ENCODE measurements at regions of chr1 and their contacts with region 1.

Region 1: GRCh38 chr1:229558571-229559335 is at the start of gene ABCB10:
- DNase-seq: peak; percentile 100
- H3K4me3 Mint-ChIP-seq: peak within 1 kb of the TSS; percentile 83
- H3K27ac Mint-ChIP-seq: peak within 1 kb of the TSS; percentile 76
- H3K4me1 Mint-ChIP-seq: peaks cover 30% of the 10 kb centered on the region
- H3K27me3 Mint-ChIP-seq: no peaks in the 10 kb centered on the region
- CTCF ChIP-seq: peak; percentile 98
- total RNA-seq, gene ABCB10: 34.8 and 38.4 TPM in 2 replicates

Region 2: GRCh38 chr1:229514578-229515275 is 44.0 kb before region 1 on chr1:
- CTCF ChIA-PET with region 1: interaction called, 14 read pairs
- POLR2A ChIA-PET with region 1: interaction called, 88 read pairs
- intact Hi-C with region 1: no loop called
- DNase-seq: peak; percentile 90
- H3K4me3 Mint-ChIP-seq: no peak overlapping the region
- H3K27ac Mint-ChIP-seq: no peak overlapping the region
- H3K4me1 Mint-ChIP-seq: peaks cover 6% of the 10 kb centered on the region
- H3K27me3 Mint-ChIP-seq: no peaks in the 10 kb centered on the region
- CTCF ChIP-seq: peak; percentile 91

Region 3: GRCh38 chr1:229547542-229547941 is 11.2 kb before region 1 on chr1:
- CTCF ChIA-PET with region 1: interaction called, 22 read pairs
- POLR2A ChIA-PET with region 1: interaction called, 18 read pairs
- intact Hi-C with region 1: no loop called
- DNase-seq: no peak
- H3K4me3 Mint-ChIP-seq: no peak overlapping the region
- H3K27ac Mint-ChIP-seq: no peak overlapping the region
- H3K4me1 Mint-ChIP-seq: peaks cover 12% of the 10 kb centered on the region
- H3K27me3 Mint-ChIP-seq: no peaks in the 10 kb centered on the region
- CTCF ChIP-seq: no peak

Region 4: GRCh38 chr1:229579059-229579673 is 20.4 kb after region 1 on chr1:
- CTCF ChIA-PET with region 1: interaction called, 14 read pairs
- POLR2A ChIA-PET with region 1: interaction called, 21 read pairs
- intact Hi-C with region 1: no loop called
- DNase-seq: peak; percentile 38
- H3K4me3 Mint-ChIP-seq: no peak overlapping the region
- H3K27ac Mint-ChIP-seq: no peak overlapping the region
- H3K4me1 Mint-ChIP-seq: peaks cover 11% of the 10 kb centered on the region
- H3K27me3 Mint-ChIP-seq: no peaks in the 10 kb centered on the region
- CTCF ChIP-seq: no peak

Region 5: GRCh38 chr1:229596925-229597699 is 38.4 kb after region 1 on chr1:
- CTCF ChIA-PET with region 1: interaction called, 20 read pairs
- POLR2A ChIA-PET with region 1: interaction called, 21 read pairs
- intact Hi-C with region 1: no loop called
- DNase-seq: peak; percentile 34
- H3K4me3 Mint-ChIP-seq: no peak overlapping the region
- H3K27ac Mint-ChIP-seq: peak overlapping the region; percentile 57
- H3K4me1 Mint-ChIP-seq: peaks cover 30% of the 10 kb centered on the region
- H3K27me3 Mint-ChIP-seq: no peaks in the 10 kb centered on the region
- CTCF ChIP-seq: no peak

Region 6: GRCh38 chr1:229625915-229626831 is 67.4 kb after region 1 on chr1 and contains the starts of genes TAF5L and URB2:
- CTCF ChIA-PET with region 1: interaction called, 65 read pairs
- POLR2A ChIA-PET with region 1: interaction called, 375 read pairs
- intact Hi-C with region 1: loop called (anchors 1 kb)
- DNase-seq: peak; percentile 96
- H3K4me3 Mint-ChIP-seq: peak within 1 kb of the TSS; percentile 99
- H3K27ac Mint-ChIP-seq: peak within 1 kb of the TSS; percentile 94
- H3K4me1 Mint-ChIP-seq: peaks cover 57% of the 10 kb centered on the region
- H3K27me3 Mint-ChIP-seq: no peaks in the 10 kb centered on the region
- CTCF ChIP-seq: peak; percentile 7
- total RNA-seq, gene TAF5L: 31.8 and 37.6 TPM in 2 replicates
- total RNA-seq, gene URB2: 25.8 and 35.5 TPM in 2 replicates

Region 7: GRCh38 chr1:229717786-229718576 is 159.2 kb after region 1 on chr1:
- CTCF ChIA-PET with region 1: no interaction called
- POLR2A ChIA-PET with region 1: no interaction called
- intact Hi-C with region 1: no loop called
- DNase-seq: no peak
- H3K4me3 Mint-ChIP-seq: no peak overlapping the region
- H3K27ac Mint-ChIP-seq: no peak overlapping the region
- H3K4me1 Mint-ChIP-seq: no peaks in the 10 kb centered on the region
- H3K27me3 Mint-ChIP-seq: no peaks in the 10 kb centered on the region
- CTCF ChIP-seq: no peak

Measured in MCF 10A (cell line).